ENCODE measurements at regions of chr5 and their contacts with region 1.

Region 1: GRCh38 chr5:149459891-149460290 is 80.8 kb upstream of the IL17B start:
- DNase-seq: no peak
- H3K4me3 ChIP-seq: no peak overlapping the region
- H3K27ac ChIP-seq: no peak overlapping the region
- H3K4me1 ChIP-seq: peaks cover 6 to 23% (median 14%) of the 10 kb centered on the region in 4 donors
- H3K27me3 ChIP-seq: no peaks in the 10 kb centered on the region
- CTCF ChIP-seq: no peak
- EP300 ChIP-seq: no peak
- POLR2A ChIP-seq: no peak

Region 2: DNA sequence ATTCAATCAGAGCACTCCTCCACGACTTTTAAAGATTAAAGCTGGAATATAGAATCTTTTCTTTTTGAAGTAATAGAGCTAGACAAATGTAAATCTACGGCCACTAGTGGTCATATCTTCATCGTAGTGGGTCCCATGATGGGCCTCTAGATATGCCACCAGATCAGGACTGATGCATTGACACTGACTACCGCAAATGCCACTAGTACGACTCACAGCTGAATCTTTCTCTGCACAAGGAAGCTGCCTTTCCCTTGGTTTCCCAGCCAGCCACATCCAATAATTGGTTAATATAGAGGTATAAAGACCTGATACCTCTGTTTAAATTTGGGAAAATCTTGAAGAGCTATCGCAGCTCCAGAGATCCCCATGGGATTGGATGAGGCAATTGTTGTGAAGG is 671.3 kb before region 1 on chr5:
- in situ Hi-C with region 1: no loop called
- intact Hi-C with region 1: no loop called
- DNase-seq: no peak
- H3K4me3 ChIP-seq: no peak overlapping the region
- H3K27ac ChIP-seq: no peak overlapping the region
- H3K4me1 ChIP-seq: no peaks in the 10 kb centered on the region
- H3K27me3 ChIP-seq: no peaks in the 10 kb centered on the region
- CTCF ChIP-seq: no peak
- EP300 ChIP-seq: no peak
- POLR2A ChIP-seq: no peak

Region 3: DNA sequence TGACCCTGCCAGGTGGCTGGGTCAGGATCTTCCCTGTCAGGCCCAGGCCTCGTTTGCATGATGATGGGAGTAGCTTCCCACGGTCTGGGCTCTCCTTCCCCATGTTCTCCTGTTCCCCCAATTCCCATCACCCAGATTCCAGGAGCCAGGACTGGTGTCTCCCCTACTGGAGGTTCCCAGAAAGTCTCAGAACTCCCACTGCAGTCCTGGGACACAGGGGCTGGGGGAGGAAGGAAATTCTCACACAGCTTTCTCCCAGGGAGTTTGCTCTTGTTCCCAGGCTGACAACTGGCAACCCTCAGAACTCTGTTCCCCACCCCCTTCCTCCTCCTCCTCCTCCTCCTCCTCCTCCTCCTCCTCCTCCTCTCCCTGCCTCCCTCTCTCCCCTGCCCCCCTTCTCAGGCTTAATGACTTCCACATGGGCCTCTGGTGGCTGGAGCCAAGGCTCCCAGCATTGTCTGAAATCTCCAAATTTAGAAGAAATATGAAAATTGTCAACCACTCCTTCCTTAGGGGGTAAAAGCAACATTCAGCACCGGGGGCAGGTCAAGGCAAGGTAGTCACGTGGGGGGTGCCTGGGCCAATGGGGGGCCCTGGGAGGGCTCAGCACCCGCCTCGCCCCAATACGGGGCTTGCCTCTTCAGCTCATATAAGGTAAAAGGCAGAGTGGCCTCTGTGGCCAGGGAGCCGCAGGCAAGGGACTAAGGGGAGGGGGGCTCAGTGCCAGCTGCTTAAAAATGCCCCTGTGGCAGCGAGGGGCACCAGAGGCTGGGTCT is 53.5 kb before region 1 on chr5:
- in situ Hi-C with region 1: no loop called
- intact Hi-C with region 1: no loop called
- DNase-seq: peak; percentile 70
- H3K4me3 ChIP-seq: peak overlapping the region; percentile 43 to 53 (median 50)
- H3K27ac ChIP-seq: peak overlapping the region; percentile 82 to 97 (median 93)
- H3K4me1 ChIP-seq: peaks cover 0 to 22% (median 14%) of the 10 kb centered on the region in 4 donors
- H3K27me3 ChIP-seq: no peaks in the 10 kb centered on the region
- CTCF ChIP-seq: no peak
- EP300 ChIP-seq: no peak
- POLR2A ChIP-seq: peak; percentile 90

Region 4: DNA sequence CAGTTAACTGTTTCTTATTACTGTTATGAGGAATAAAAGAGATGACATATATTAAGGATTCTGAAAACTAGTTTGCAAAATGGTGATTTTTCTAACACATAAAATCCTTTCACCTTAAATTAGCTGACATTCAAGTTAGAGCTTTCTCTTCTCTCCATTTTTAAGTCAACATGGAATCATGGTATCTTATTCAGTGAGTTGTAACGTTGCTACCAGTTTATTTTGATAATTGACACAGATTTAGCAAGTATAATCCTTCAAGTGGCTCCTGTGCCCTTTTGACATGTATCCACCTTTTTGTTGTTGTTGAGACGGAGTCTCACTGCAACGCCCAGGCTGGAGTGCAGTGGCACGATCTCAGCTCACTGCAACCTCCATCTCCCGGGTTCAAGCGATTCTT is 32.9 kb after region 1 on chr5:
- in situ Hi-C with region 1: no loop called
- intact Hi-C with region 1: loop called (anchors 1 kb)
- DNase-seq: no peak
- H3K4me3 ChIP-seq: no peak overlapping the region
- H3K27ac ChIP-seq: peak overlapping the region in 3 of 4 donors; percentile 2 to 91 (median 3)
- H3K4me1 ChIP-seq: peaks cover 6 to 47% (median 22%) of the 10 kb centered on the region in 4 donors
- H3K27me3 ChIP-seq: no peaks in the 10 kb centered on the region
- CTCF ChIP-seq: no peak
- EP300 ChIP-seq: no peak
- POLR2A ChIP-seq: no peak

Region 5: GRCh38 chr5:149646564-149646963 is 186.7 kb after region 1 on chr5:
- in situ Hi-C with region 1: no loop called
- intact Hi-C with region 1: no loop called
- DNase-seq: no peak
- H3K4me3 ChIP-seq: no peak overlapping the region
- H3K27ac ChIP-seq: no peak overlapping the region
- H3K4me1 ChIP-seq: peaks cover 0 to 4% (median 2%) of the 10 kb centered on the region in 4 donors
- H3K27me3 ChIP-seq: no peaks in the 10 kb centered on the region
- CTCF ChIP-seq: no peak
- EP300 ChIP-seq: no peak
- POLR2A ChIP-seq: no peak

Measured in transverse colon (tissue), 4 donors.